GM13976 (cell line): ENCODE measurements at regions of chr1 and their contacts with region 1.

Region 1: GRCh38 chr1:98048244-98048643 is 127.4 kb upstream of the DPYD start:
- DNase-seq: peak; percentile 62
- CTCF ChIP-seq: no peak

Region 2: GRCh38 chr1:97820470-97821188 is 227.6 kb before region 1 on chr1:
- in situ Hi-C with region 1: loop called (anchors 25 kb)
- DNase-seq: no peak
- CTCF ChIP-seq: no peak